BJ (cell line): ENCODE measurements at regions of chr19 and their contacts with region 1.

Region 1: GRCh38 chr19:48391107-48391986 is at the start of gene KDELR1:
- DNase-seq: no peak
- H3K4me3 ChIP-seq: peak within 1 kb of the TSS; percentile 98
- H3K27me3 ChIP-seq: peaks cover 4% of the 10 kb centered on the region; the same call in 1 of the 2 replicates
- CTCF ChIP-seq: peak; percentile 99
- polyA plus RNA-seq, gene KDELR1: 237 and 273 TPM in 2 replicates

Region 2: GRCh38 chr19:48321622-48322591 is 69.4 kb before region 1 on chr19:
- CTCF ChIA-PET with region 1: interaction called, 12 read pairs
- POLR2A ChIA-PET with region 1: interaction called, 11 read pairs
- DNase-seq: peak; percentile 91
- H3K4me3 ChIP-seq: peak overlapping the region; percentile 59
- H3K27me3 ChIP-seq: no peaks in the 10 kb centered on the region
- CTCF ChIP-seq: no peak

Region 3: DNA sequence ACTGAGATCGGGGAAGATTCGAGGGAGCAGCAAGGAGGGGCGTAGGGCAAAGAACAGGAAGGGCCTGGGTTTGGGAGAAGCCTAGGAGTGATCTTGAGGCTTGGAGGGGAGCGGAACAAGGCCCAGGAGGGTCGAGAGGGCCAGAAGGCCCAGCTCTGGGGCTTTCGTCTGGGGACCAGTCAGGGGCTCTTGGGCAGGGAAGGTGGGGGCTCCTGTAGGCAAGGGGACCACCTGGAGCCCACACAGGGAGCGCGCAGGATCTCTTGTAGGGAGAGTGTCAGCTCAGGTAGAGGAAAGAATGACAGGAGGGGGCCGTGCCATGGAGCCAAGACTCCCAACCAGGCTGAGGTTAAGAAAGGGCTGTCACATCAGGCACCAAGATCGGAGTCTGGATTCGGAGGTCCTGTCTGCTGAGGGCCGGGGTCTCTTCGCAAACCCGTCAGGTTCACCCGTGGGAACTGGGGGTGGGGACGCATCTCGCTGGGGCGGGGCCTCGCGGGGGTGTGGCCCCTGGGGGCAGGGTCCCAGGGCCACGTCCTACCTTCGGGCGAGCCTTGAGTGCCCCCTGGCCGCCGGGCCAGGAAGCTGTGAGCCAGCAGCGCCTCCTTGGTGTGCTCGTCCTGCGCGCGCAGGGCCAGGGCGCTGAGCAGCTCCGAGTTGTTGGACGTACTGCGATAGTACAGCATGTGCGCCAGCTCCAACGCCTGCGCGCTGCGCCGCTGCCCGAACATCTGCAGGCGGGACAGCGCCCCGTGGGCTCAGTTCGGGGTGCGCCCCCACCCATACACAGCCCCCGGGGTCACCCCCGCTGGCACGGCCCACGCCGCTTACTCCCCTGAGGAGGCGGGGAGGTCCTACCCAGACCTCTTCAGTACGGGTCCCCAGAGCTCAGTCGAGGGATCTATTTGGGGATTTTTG is 57.6 kb before region 1 on chr19:
- CTCF ChIA-PET with region 1: interaction called, 13 read pairs
- POLR2A ChIA-PET with region 1: no interaction called
- DNase-seq: peak; percentile 37
- H3K4me3 ChIP-seq: peak overlapping the region; percentile 35
- H3K27me3 ChIP-seq: no peaks in the 10 kb centered on the region
- CTCF ChIP-seq: peak; percentile 93

Region 4: DNA sequence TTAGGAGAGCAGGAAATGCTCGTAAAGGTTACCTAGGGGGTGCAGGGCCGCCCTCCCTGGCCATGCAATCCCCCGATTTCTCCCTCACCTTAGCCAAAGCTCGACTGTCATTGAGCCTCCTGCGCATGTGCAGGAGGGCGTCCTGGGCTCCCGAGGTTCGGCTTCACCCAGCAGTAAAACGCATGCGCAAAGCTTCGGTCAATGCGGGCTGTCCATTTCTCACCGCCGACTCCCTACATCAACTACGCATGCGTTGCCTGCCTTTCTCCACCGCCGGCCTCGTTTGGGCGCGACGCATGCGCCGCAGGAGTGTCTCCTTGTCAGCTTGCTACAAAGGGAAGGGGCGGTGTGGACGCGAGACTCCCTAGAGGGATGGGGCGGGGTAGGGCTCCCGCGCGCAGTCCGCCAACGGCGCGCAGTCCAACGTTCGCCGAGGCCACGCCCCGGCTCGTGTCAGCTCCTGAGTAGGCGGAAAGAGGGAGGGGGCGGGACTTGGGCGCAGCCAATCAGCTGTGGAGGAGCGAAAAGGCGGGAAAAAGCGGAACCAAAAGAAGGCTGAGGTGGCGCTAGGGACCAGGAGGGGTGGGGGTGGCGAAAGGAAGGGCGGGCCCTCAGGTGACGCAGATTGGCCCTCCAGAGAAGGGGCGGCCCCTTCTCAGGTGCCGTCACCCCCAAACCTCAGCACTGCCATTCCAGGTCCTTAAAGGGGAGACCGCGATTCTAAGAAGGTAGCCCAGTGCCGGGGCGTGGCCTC is 27.4 kb before region 1 on chr19 and contains the starts of genes SYNGR4 and TMEM143:
- CTCF ChIA-PET with region 1: interaction called, 10 read pairs
- POLR2A ChIA-PET with region 1: interaction called, 8 read pairs
- DNase-seq: peak; percentile 100
- H3K4me3 ChIP-seq: peak within 1 kb of the TSS; percentile 52
- H3K27me3 ChIP-seq: no peaks in the 10 kb centered on the region
- CTCF ChIP-seq: no peak
- polyA plus RNA-seq, gene SYNGR4: not detected in 2 replicates
- polyA plus RNA-seq, gene TMEM143: 5.7 and 9.9 TPM in 2 replicates

Region 5: GRCh38 chr19:48372904-48373303 is 18.4 kb before region 1 on chr19:
- CTCF ChIA-PET with region 1: interaction called, 6 read pairs
- POLR2A ChIA-PET with region 1: interaction called, 11 read pairs
- DNase-seq: no peak
- H3K4me3 ChIP-seq: no peak overlapping the region
- H3K27me3 ChIP-seq: 0 out of 2 replicates have a peak, but pooled peaks cover 1% of the 10 kb centered on the region
- CTCF ChIP-seq: no peak

Region 6: DNA sequence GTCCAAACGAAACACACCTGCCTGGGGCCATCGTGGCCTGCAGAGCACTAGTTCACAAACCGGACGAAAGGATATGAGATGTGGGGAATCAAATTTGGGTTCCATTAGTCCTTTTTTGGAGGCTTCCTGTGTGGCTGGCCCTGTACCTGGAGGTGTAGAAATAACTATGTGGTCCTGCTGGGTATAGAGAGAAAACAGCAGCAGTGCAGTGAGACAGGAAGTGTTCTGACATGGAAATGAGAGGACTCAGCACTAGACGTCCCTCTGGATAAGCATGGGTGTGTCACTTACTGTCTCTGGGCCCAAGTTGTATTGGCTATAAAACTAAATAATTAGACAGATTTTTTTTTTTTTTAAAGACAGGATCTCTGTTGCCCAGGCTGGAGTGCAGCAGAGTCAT is 12.3 kb before region 1 on chr19:
- CTCF ChIA-PET with region 1: interaction called, 15 read pairs
- POLR2A ChIA-PET with region 1: interaction called, 11 read pairs
- DNase-seq: no peak
- H3K4me3 ChIP-seq: no peak overlapping the region
- H3K27me3 ChIP-seq: no peaks in the 10 kb centered on the region
- CTCF ChIP-seq: no peak

Region 7: DNA sequence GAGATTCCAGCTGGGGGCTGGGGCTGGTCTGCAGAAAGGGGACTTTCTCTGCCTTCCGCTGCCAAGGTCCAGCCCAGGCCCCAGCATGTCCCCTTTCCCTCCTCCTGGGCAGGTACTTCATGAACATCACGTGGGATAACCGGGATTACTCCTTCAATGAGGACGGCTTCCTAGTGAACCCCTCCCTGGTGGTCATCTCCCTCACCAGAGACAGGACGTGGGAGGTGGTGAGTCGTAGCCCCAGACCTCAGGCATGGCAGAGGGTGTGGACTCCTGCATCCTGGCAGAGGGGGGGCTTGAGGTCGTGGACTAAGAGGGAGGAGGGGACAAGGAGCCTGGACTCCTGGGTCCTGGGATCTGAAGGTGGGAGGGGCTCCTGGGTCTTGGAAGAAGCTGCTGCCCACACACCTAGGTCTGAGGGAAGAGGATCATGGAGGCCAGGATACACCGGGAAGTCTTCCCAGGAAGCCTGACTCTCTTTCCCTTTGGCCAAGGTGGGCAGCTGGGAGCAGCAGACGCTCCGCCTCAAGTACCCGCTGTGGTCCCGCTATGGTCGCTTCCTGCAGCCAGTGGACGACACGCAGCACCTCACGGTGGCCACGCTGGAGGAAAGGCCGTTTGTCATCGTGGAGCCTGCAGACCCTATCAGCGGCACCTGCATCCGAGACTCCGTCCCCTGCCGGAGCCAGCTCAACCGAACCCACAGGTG is 22.7 kb after region 1 on chr19:
- CTCF ChIA-PET with region 1: no interaction called
- POLR2A ChIA-PET with region 1: no interaction called
- DNase-seq: no peak
- H3K4me3 ChIP-seq: no peak overlapping the region
- H3K27me3 ChIP-seq: no peaks in the 10 kb centered on the region
- CTCF ChIP-seq: no peak

Region 8: DNA sequence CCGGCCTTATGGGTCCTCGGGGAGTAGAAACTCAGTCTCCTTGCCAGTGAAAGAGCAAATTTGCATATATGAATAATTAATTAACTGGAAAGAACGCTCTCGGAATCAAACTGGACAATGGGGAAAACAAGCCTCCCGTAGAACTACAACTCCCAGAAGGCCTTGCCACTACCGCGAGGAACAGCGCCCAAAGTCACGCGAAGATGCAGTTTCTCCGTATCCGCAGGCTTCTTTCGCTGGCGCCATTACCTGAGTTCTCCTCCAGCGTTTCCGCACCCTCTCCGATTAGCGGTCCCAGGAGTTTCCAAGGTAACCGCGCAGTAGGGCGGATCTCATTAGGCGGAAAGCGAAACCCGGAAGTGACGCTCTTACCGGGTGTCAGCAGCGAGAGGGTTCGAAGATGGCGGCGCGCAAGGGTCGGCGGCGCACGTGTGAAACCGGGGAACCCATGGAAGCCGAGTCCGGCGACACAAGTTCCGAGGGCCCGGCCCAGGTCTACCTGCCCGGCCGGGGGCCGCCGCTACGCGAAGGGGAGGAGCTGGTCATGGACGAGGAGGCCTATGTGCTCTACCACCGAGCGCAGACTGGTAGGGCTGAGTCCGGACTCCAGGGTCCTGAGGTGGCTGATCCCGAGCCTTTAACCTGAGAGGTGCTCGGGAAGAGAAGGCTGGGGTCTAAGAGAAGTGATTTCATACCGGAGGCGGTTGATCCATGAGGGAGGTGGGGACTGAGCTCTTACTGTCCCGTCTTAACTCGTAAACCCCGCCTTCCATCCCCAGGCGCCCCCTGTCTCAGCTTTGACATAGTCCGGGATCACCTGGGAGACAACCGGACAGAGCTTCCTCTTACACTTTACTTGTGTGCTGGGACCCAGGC is 54.5 kb after region 1 on chr19 and contains the start of gene GRWD1:
- CTCF ChIA-PET with region 1: interaction called, 18 read pairs
- POLR2A ChIA-PET with region 1: no interaction called
- DNase-seq: peak; percentile 88
- H3K4me3 ChIP-seq: peak within 1 kb of the TSS; percentile 87
- H3K27me3 ChIP-seq: no peaks in the 10 kb centered on the region
- CTCF ChIP-seq: peak; percentile 26
- polyA plus RNA-seq, gene GRWD1: 13.9 and 20.0 TPM in 2 replicates